CD4-positive, alpha-beta T cell (primary cell): ENCODE measurements at regions of chr16 and their contacts with region 1.

Region 1: GRCh38 chr16:89873972-89874689 is 739 bp downstream of the TCF25 start:
- DNase-seq: peak; percentile 88 to 98 (median 95)
- ATAC-seq: peak; percentile 78
- H3K4me3 ChIP-seq: peak overlapping the region; percentile 98
- H3K4me3 Mint-ChIP-seq: peak overlapping the region; percentile 87
- H3K27ac ChIP-seq: peak overlapping the region; percentile 99 to 100
- H3K27ac Mint-ChIP-seq: peak overlapping the region; percentile 79
- H3K4me1 ChIP-seq: peaks cover 23% of the 10 kb centered on the region
- H3K4me1 Mint-ChIP-seq: peaks cover 14% of the 10 kb centered on the region
- H3K27me3 ChIP-seq: no peaks in the 10 kb centered on the region
- H3K27me3 Mint-ChIP-seq: no peaks in the 10 kb centered on the region
- CTCF ChIP-seq: no peak

Region 2: GRCh38 chr16:89246903-89247733 is 627.0 kb before region 1 on chr16:
- CTCF ChIA-PET with region 1: no interaction called
- POLR2A ChIA-PET with region 1: interaction called, 3 read pairs
- intact Hi-C with region 1: loop called in 1 of 2 experiments (anchors 5 kb)
- DNase-seq: peak; percentile 91 to 100 (median 96)
- ATAC-seq: peak; percentile 91
- H3K4me3 ChIP-seq: peak overlapping the region; percentile 35
- H3K4me3 Mint-ChIP-seq: peak overlapping the region; percentile 82
- H3K27ac ChIP-seq: no peak overlapping the region
- H3K27ac Mint-ChIP-seq: peak overlapping the region; percentile 72
- H3K4me1 ChIP-seq: peaks cover 27% of the 10 kb centered on the region
- H3K4me1 Mint-ChIP-seq: peaks cover 6% of the 10 kb centered on the region
- H3K27me3 ChIP-seq: no peaks in the 10 kb centered on the region
- H3K27me3 Mint-ChIP-seq: no peaks in the 10 kb centered on the region
- CTCF ChIP-seq: no peak

Region 3: DNA sequence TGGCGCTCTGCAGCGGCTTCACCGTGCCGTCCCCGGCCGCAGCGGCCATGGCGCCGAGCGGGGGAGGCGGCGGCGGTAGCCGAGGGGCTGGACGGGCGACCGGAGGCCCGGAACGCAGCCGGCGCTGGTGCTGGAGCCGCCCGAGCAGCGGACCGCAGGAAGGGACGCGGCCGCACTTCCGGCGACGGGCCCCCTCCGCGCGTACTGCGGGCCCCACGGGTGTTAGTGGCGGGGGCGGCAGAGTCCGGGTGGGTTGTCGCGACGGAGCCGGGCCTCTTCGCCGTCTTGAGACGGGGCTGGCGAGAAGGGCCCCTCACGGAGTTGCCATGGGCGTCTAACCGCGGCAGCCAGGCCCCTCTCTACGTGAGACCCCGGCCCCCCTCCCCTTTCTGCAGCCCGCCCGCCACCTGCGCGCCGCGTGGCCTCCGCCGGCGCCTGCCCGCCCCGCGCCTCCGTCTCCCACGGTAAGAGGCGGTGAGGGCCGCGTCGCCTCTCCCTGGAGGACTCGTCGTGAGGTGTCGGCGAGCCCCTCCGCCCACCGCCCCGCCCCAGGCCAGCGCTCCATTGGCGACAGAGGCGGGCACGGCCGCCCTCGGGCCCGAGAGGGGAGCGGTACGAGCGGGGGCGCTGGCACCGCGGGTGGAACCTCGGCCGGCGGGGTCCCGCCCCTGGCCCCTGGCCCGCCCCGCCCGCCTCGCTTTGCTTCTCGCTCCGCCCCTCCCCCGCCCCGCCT is 153.2 kb before region 1 on chr16 and contains the starts of genes VPS9D1 and ZNF276:
- CTCF ChIA-PET with region 1: no interaction called
- POLR2A ChIA-PET with region 1: interaction called, 25 read pairs
- intact Hi-C with region 1: loop called in 1 of 2 experiments (anchors 2 kb)
- DNase-seq: peak; percentile 73 to 93 (median 85)
- ATAC-seq: peak; percentile 43
- H3K4me3 ChIP-seq: peak within 1 kb of the TSS; percentile 87
- H3K4me3 Mint-ChIP-seq: peak within 1 kb of the TSS; percentile 99
- H3K27ac ChIP-seq: peak within 1 kb of the TSS; percentile 69 to 94
- H3K27ac Mint-ChIP-seq: peak within 1 kb of the TSS; percentile 98
- H3K4me1 ChIP-seq: peaks cover 57% of the 10 kb centered on the region
- H3K4me1 Mint-ChIP-seq: peaks cover 32% of the 10 kb centered on the region
- H3K27me3 ChIP-seq: no peaks in the 10 kb centered on the region
- H3K27me3 Mint-ChIP-seq: no peaks in the 10 kb centered on the region
- CTCF ChIP-seq: no peak
- total RNA-seq, gene VPS9D1: 18.5 to 21.8 TPM
- total RNA-seq, gene ZNF276: 127 to 137 TPM

Region 4: DNA sequence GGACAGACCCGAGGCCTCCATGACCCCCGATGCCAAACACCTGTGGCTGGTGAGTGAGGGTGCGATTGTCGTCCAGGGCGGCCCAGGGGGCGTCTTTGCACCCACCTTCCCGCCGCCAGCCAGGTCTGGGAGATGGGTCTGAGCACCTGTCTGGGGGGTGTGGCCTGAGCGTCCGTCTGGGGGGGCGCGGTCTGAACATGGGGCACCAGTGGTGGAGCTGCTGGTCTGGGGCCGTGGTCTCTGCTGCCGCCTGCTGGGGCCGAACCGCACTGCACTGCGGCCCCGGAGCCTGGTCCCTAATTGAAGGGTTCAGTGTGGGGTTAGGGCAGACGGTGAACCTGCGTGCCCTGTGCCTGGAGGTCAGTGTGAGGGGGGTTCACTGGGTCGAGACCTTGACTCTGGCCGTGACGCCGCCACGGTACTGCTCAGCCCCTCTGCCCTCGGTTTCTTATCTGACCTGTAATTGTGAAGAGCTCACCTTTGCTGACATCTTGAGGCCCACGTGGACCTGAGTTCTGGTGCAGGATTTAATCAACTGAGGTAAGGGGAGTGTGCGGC is 13.3 kb before region 1 on chr16:
- CTCF ChIA-PET with region 1: interaction called, 38 read pairs
- POLR2A ChIA-PET with region 1: interaction called, 104 read pairs
- intact Hi-C with region 1: no loop called
- DNase-seq: peak; percentile 56 to 85 (median 70)
- ATAC-seq: peak; percentile 85
- H3K4me3 ChIP-seq: no peak overlapping the region
- H3K4me3 Mint-ChIP-seq: peak overlapping the region; percentile 21
- H3K27ac ChIP-seq: no peak overlapping the region
- H3K27ac Mint-ChIP-seq: peak overlapping the region; percentile 57
- H3K4me1 ChIP-seq: peaks cover 42% of the 10 kb centered on the region
- H3K4me1 Mint-ChIP-seq: peaks cover 29% of the 10 kb centered on the region
- H3K27me3 ChIP-seq: no peaks in the 10 kb centered on the region
- H3K27me3 Mint-ChIP-seq: no peaks in the 10 kb centered on the region
- CTCF ChIP-seq: peak; percentile 98

Region 5: DNA sequence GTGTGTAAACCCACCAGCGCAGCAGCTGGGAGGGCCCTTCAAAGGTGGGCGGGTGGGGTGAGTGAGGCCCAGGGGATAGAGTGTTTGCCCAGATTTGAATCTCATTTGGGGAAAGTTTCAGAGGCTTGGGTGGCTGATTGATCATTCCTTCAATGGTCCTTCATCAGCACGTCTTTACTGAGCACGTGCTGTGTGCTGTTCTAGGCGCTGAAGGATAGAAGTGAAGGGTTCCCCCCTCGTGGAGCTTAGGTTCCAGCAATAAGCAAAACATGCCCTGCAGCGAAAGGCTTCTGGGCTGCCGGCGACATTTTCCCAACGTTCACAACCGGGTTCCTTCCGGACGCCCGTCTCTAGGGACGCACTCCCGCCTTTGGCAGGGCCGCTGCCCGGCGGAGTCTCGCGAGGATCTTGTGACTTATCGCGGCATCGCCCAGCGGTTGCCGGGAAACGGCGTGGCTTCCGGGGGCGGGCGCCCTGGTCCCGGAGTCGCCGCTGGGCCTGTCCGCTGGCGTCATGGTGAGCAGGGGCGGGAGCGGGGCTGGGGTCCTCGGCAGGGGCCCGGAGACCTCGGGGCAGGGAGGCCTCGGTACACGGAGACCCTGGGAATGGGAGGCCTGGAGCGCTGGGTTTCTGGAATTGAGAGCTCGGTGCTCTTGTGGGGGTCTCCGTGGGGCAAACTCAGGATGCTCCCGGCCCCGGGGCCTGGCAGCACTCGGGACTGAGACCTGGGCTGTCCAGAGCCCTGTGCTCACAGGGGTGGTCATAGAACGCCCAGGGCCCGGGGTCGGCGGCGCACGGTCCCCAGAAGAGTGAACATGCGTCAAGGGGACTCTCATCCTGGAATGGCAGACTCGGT is 148.3 kb after region 1 on chr16:
- CTCF ChIA-PET with region 1: no interaction called
- POLR2A ChIA-PET with region 1: interaction called, 3 read pairs
- intact Hi-C with region 1: loop called in 1 of 2 experiments (anchors 5 kb)
- DNase-seq: peak; percentile 53 to 88 (median 71)
- ATAC-seq: peak; percentile 66
- H3K4me3 ChIP-seq: peak overlapping the region; percentile 57
- H3K4me3 Mint-ChIP-seq: peak overlapping the region; percentile 55
- H3K27ac ChIP-seq: no peak overlapping the region
- H3K27ac Mint-ChIP-seq: peak overlapping the region; percentile 30
- H3K4me1 ChIP-seq: peaks cover 54% of the 10 kb centered on the region
- H3K4me1 Mint-ChIP-seq: peaks cover 20% of the 10 kb centered on the region
- H3K27me3 ChIP-seq: peaks cover 0 to 5% of the 10 kb centered on the region in 2 experiments
- H3K27me3 Mint-ChIP-seq: no peaks in the 10 kb centered on the region
- CTCF ChIP-seq: no peak